Activated CD4-positive, alpha-beta T cell treated with anti-CD3 and anti-CD28 coated beads, Interleukin-2, amount 10 ng/mL, durations not matched to agents 24 days and 14 days (primary cell): ENCODE measurements at regions of chr1 and their contacts with region 1.

Region 1: GRCh38 chr1:219173758-219174588 is at the start of gene LYPLAL1:
- DNase-seq: peak; percentile 97
- H3K4me3 Mint-ChIP-seq: peak within 1 kb of the TSS; percentile 99
- H3K27ac Mint-ChIP-seq: peak within 1 kb of the TSS; percentile 98
- H3K4me1 Mint-ChIP-seq: peaks cover 29% of the 10 kb centered on the region
- H3K27me3 Mint-ChIP-seq: no peaks in the 10 kb centered on the region
- total RNA-seq, gene LYPLAL1: 19.7 and 22.9 TPM in 2 replicates

Region 2: GRCh38 chr1:218284934-218285635 is 888.9 kb before region 1 on chr1 and contains the start of gene RRP15:
- intact Hi-C with region 1: loop called (anchors 10 kb)
- DNase-seq: peak; percentile 96
- H3K4me3 Mint-ChIP-seq: peak within 1 kb of the TSS; percentile 93
- H3K27ac Mint-ChIP-seq: peak within 1 kb of the TSS; percentile 89
- H3K4me1 Mint-ChIP-seq: peaks cover 19% of the 10 kb centered on the region
- H3K27me3 Mint-ChIP-seq: peaks cover 7% of the 10 kb centered on the region
- total RNA-seq, gene RRP15: 41.0 and 44.7 TPM in 2 replicates

Region 3: DNA sequence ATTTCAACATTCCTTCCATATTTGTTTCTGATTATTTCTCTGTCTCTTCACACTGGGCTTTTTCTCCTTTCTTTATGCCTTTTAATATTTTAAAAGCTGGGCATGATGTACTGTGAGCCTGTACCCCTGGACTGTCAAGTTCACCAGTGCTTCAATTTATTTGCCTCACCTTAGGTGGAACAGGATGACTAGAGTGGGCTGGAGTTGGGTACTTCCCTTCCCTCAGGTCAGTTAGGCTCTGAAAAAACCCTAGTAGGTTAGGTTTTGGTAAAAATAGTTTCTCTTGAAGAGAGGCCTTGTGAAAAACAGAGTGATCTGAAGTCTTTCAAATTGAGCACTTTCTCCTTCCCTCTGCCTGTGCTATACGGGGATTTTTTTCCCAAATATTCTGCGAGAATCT is 163.3 kb before region 1 on chr1:
- intact Hi-C with region 1: no loop called
- DNase-seq: no peak
- H3K4me3 Mint-ChIP-seq: no peak overlapping the region
- H3K27ac Mint-ChIP-seq: no peak overlapping the region
- H3K4me1 Mint-ChIP-seq: no peaks in the 10 kb centered on the region
- H3K27me3 Mint-ChIP-seq: no peaks in the 10 kb centered on the region

Region 4: DNA sequence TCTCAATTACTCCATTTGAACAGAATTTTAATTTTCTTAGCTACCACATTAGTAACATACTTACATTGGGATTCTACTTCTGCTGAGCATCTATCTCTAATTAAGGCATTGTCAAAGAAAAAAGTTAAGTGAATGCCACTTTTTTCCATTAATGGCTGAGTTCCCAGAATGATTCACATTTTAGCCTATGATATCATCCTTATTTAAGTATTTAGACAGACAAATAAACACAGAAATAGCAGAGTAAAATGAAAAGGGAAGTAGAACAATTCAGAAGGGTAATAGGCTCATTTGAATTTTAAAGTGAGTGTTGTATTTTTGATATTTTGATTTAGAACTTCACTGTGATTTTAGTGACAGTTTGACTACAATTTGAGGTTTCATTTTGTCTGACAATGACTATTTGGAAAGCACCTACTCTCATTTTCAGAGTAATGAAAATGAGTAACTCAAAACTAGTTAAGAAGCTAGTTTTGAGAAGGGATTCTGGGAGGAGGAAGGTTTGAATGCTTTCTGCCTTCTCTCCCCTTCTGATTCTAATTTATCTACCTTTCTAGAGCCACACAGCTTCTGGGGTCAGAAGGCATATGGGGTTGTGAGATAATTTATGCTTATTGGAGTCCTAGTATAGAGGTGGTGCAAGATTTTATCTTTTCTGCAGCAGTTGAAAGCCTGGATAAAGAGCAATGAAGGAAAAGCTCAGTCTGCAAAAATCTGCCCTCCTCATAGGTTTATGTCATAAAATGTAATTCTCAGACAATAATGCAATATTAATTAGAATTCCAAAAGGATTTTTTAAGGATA is 15.2 kb after region 1 on chr1:
- intact Hi-C with region 1: loop called (anchors 1 kb)
- DNase-seq: no peak
- H3K4me3 Mint-ChIP-seq: peak overlapping the region; percentile 47
- H3K27ac Mint-ChIP-seq: peak overlapping the region; percentile 78
- H3K4me1 Mint-ChIP-seq: peaks cover 19% of the 10 kb centered on the region
- H3K27me3 Mint-ChIP-seq: no peaks in the 10 kb centered on the region

Region 5: DNA sequence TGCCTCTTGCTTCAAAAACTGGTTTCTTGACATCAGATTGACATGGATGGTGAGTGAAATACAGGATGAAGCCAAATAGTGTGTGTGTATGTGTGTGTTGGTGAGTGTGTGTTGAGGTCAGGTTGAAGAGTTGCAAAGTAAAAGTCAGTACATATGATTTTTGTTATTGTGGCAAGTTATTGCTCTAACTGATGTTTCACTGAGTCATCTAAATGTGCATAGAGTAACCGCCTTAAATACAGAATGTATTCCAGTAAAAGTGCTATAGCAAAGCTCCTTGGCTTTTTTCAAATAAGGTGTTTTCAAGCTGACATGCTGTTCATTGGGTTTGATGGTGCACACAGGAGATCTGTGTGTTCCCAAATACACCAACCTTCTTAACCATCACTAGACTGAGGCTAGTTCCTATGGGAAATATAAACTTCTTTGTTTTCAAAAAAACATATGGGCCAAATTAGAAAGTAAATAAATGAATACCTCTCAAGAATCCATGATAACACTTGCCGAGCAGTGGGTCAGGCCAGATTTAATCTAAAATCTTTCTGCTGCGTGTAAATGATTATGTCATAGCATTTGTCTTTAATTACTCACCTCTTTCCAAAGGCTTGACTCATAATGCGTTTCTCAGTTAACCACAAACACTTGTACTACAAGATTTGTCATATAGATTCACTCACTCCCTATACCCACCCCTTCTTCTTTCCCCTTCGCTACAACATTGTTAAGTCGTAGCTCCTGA is 150.8 kb after region 1 on chr1:
- intact Hi-C with region 1: loop called (anchors 5 kb)
- DNase-seq: no peak
- H3K4me3 Mint-ChIP-seq: no peak overlapping the region
- H3K27ac Mint-ChIP-seq: no peak overlapping the region
- H3K4me1 Mint-ChIP-seq: no peaks in the 10 kb centered on the region
- H3K27me3 Mint-ChIP-seq: peaks cover 4% of the 10 kb centered on the region